ENCODE measurements at regions of chr12 and their contacts with region 1.

Region 1: GRCh38 chr12:57111031-57111734 is at the start of gene STAT6:
- DNase-seq: no peak
- ATAC-seq: peak; percentile 75
- H3K4me3 ChIP-seq: peak within 1 kb of the TSS; percentile 44 to 75
- H3K27ac ChIP-seq: peak within 1 kb of the TSS; percentile 95
- H3K4me1 ChIP-seq: peaks cover 17% of the 10 kb centered on the region
- H3K27me3 ChIP-seq: no peaks in the 10 kb centered on the region
- CTCF ChIP-seq: no peak; the same call in 1 of the 2 replicates
- total RNA-seq, gene STAT6: 52.3 TPM

Region 2: GRCh38 chr12:56751712-56752598 is 359.2 kb before region 1 on chr12 and contains the start of gene PRIM1:
- CTCF ChIA-PET with region 1: interaction called, 12 read pairs
- POLR2A ChIA-PET with region 1: no interaction called
- in situ Hi-C with region 1: no loop called
- intact Hi-C with region 1: loop called (anchors 5 kb)
- DNase-seq: peak; percentile 53
- ATAC-seq: peak; percentile 97
- H3K4me3 ChIP-seq: peak within 1 kb of the TSS; percentile 79 to 91
- H3K27ac ChIP-seq: peak within 1 kb of the TSS; percentile 93
- H3K4me1 ChIP-seq: peaks cover 5% of the 10 kb centered on the region; the same call in 1 of the 2 replicates
- H3K27me3 ChIP-seq: no peaks in the 10 kb centered on the region
- CTCF ChIP-seq: no peak
- total RNA-seq, gene PRIM1: 25.0 TPM

Region 3: DNA sequence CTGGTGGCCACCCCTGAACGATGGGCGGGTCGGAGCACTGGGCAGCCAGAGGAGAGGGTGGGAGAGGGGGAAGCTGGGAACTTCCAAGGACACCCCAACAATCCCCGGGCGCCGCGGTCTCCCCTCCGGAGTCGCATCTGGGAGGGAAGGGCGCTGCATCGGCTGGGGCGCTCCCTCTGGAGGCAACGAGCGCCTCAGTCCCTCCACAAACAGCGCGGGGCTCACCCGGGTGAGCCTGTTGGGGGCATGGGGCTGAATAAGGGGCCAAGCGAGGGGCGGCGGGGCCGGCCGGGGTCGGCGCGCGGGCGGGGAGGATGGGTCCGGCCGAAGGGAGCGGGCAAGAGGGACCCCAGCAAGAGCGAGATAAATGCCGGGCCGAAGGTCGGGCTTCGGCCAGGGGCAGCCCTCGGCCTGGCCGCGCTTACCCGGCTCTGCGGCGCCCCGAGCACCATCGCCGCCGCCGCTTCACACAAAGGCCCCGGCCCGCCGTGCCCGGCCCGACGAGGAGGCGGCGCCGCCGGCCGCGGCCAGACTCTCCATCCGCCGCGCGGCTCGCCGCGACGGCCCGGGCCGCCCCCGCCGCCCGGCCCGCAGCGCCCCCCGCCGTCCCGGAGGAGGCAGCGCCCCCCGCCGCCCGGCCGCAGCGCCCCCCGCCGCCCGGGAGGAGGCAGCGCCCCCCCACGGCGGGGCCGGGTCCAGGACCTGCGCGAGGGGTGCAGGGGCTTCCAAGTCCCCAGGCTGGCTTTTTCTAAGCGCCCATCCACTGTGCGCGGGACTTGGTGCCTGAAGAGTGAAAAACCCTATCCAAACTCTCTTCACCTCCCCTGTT is 105.0 kb before region 1 on chr12 and contains the start of gene ZBTB39:
- CTCF ChIA-PET with region 1: interaction called, 17 read pairs
- POLR2A ChIA-PET with region 1: no interaction called
- in situ Hi-C with region 1: no loop called
- intact Hi-C with region 1: loop called (anchors 2 kb)
- DNase-seq: no peak
- ATAC-seq: peak; percentile 91
- H3K4me3 ChIP-seq: peak within 1 kb of the TSS; percentile 73 to 74
- H3K27ac ChIP-seq: peak within 1 kb of the TSS; percentile 57
- H3K4me1 ChIP-seq: peaks cover 14% of the 10 kb centered on the region
- H3K27me3 ChIP-seq: no peaks in the 10 kb centered on the region
- CTCF ChIP-seq: peak; percentile 98
- total RNA-seq, gene ZBTB39: 5.8 TPM

Region 4: GRCh38 chr12:57078519-57079404 is 32.4 kb before region 1 on chr12 and contains the start of gene NEMP1:
- CTCF ChIA-PET with region 1: interaction called, 12 read pairs
- POLR2A ChIA-PET with region 1: interaction called, 8 read pairs
- in situ Hi-C with region 1: no loop called
- intact Hi-C with region 1: no loop called
- DNase-seq: peak; percentile 100
- ATAC-seq: peak; percentile 100
- H3K4me3 ChIP-seq: peak within 1 kb of the TSS; percentile 63 to 67
- H3K27ac ChIP-seq: peak within 1 kb of the TSS; percentile 90
- H3K4me1 ChIP-seq: no peaks in the 10 kb centered on the region
- H3K27me3 ChIP-seq: no peaks in the 10 kb centered on the region
- CTCF ChIP-seq: no peak
- total RNA-seq, gene NEMP1: 46.9 TPM

Region 5: DNA sequence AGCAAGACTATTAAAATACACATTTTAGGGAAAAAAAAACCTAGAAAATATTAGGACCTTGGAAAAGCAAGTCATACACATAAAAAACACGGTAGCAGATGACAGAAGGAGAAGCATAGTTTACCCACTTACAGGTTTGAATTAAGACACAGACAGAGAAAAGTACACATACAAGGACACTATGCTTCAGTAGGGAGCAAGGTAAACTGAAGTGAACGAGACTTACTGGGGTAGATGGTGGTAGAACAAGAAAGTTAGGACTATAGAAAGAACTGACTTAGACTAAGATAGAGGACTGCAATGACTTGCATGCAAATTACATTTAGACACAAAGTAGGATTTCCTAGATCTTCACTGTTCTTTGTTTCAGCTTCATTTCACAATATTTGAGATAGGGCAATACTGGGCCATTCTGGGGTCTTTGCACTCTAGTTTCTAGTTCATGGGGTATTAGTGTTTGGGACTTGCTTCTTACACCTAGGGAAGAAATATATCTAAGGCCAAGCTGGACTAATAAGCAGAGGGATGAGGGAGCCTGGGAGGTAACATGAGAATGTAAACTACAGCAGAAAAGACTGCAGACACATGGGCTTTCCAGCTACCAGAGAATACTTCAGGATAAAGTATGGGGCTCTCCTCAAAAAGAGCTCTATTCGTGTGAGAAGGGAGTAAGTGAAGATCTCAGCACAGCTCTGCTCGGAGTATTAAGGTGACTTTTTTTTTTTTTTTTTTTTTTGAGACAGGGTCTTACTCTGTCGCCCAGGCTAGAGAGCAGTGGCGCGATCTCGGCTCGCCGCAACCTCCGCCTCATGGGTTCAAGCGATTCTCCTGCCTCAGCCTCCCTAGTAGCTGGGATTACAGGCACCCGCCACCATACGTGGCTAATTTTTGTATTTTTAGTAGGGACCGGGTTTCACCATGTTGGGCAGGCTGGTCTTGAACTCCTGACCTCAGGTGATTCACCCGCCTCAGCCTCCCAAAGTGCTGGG is 167.6 kb after region 1 on chr12:
- CTCF ChIA-PET with region 1: no interaction called
- POLR2A ChIA-PET with region 1: interaction called, 14 read pairs
- in situ Hi-C with region 1: no loop called
- intact Hi-C with region 1: no loop called
- DNase-seq: no peak
- ATAC-seq: no peak
- H3K4me3 ChIP-seq: no peak overlapping the region
- H3K27ac ChIP-seq: no peak overlapping the region
- H3K4me1 ChIP-seq: no peaks in the 10 kb centered on the region
- H3K27me3 ChIP-seq: no peaks in the 10 kb centered on the region
- CTCF ChIP-seq: no peak